ENCODE measurements at regions of chr16 and their contacts with region 1.

Region 1: DNA sequence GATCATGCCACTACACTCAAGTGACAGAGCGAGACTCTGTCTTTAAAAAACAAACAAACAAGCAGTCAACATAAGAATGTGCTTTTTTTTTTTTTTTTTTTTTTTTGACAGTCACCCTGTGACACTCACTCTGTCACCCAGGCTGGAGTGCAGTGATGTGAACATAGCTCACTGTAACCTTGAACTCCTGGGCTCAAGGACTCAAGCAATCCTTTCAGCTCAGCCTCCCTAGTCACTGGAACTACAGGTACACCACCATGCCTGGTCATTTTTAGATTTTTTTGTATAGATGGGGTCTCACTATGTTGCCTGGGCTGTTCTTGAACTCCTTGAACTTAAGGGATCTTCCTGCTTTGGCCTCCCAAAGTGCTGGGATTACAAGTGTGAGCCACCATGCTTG is 15.3 kb upstream of the CHP2 start:
- DNase-seq: no peak
- H3K4me3 Mint-ChIP-seq: no peak overlapping the region
- H3K27ac Mint-ChIP-seq: no peak overlapping the region
- H3K4me1 Mint-ChIP-seq: peaks cover 5% of the 10 kb centered on the region
- H3K27me3 Mint-ChIP-seq: peaks cover 18% of the 10 kb centered on the region

Region 2: GRCh38 chr16:23821875-23822688 is 82.6 kb after region 1 on chr16:
- intact Hi-C with region 1: no loop called
- DNase-seq: no peak
- H3K4me3 Mint-ChIP-seq: no peak overlapping the region
- H3K27ac Mint-ChIP-seq: no peak overlapping the region
- H3K4me1 Mint-ChIP-seq: peaks cover 13% of the 10 kb centered on the region
- H3K27me3 Mint-ChIP-seq: peaks cover 12% of the 10 kb centered on the region

Region 3: DNA sequence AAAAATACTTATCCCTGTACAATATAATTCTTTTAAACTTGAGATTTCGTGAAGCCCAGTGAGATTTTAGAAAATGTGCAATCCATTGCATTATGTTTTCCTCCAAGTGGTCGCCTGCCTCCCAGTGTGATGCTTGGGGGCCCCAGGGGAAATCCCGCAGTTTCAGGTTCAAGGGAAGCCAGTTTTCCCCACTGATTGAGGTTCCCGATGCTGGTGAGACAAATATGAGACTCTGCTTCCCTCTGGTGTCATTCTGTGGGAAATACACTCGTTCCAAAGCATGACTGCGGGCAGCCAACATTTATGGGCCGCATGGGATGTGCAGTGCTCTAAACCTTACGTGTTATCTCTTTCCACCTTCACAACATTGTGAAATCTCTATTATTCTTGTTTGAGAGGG is 297.1 kb after region 1 on chr16:
- intact Hi-C with region 1: loop called (anchors 5 kb)
- DNase-seq: peak; percentile 81
- H3K4me3 Mint-ChIP-seq: peak overlapping the region; percentile 31
- H3K27ac Mint-ChIP-seq: no peak overlapping the region
- H3K4me1 Mint-ChIP-seq: peaks cover 29% of the 10 kb centered on the region
- H3K27me3 Mint-ChIP-seq: no peaks in the 10 kb centered on the region

Region 4: DNA sequence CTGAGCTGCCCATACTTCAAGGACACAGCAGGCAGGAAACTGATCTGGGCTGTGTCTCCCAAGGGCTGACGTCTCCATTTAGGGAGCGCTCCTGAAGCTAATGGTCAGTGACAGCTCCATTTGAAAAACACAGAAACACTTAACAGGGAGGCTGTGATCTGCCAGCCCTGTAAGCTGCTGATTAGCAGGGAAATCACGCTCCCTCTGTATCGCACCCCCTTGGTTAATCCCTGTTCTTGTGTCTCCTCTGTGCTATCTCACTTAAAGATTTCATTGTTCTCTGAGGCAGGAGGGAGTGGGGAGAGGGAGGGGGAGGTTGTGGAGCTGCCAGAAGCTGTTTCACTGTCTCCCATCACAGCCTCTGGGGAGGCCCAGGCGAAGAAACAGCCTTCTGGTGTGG is 469.2 kb after region 1 on chr16:
- intact Hi-C with region 1: no loop called
- DNase-seq: no peak
- H3K4me3 Mint-ChIP-seq: no peak overlapping the region
- H3K27ac Mint-ChIP-seq: no peak overlapping the region
- H3K4me1 Mint-ChIP-seq: no peaks in the 10 kb centered on the region
- H3K27me3 Mint-ChIP-seq: no peaks in the 10 kb centered on the region

Measured in activated CD4-positive, alpha-beta T cell treated with anti-CD3 and anti-CD28 coated beads, Interleukin-2, amount 10 ng/mL, durations not matched to agents 24 days and 14 days (primary cell).